Activated B cell treated with CpG ODN at 0.5 μM for 24 hours (primary cell): ENCODE measurements at regions of chr18 and their contacts with region 1.

Region 1: DNA sequence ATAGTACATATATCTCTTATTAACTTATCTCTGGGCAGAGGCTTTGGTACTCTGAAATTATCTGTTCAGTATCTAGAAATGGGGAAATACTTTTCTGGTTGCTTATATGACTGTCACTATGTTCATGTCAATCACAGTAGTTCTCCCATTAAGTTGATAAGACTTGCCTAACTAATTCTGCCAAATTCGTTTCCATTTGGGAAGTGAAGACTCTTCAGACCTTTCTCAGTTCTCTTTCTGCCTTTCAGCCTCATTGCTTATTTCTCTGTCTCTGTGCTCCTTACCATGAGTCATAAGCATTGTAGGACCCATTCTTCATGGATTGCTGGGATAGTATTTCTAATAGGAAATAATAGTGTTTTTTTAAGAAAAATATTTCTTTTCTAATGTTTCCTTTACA is 113.5 kb downstream of the PHLPP1 start:
- DNase-seq: no peak
- ATAC-seq: peak; percentile 25
- H3K4me3 Mint-ChIP-seq: no peak overlapping the region
- H3K27ac Mint-ChIP-seq: no peak overlapping the region
- H3K4me1 Mint-ChIP-seq: peaks cover 35% of the 10 kb centered on the region
- H3K27me3 Mint-ChIP-seq: no peaks in the 10 kb centered on the region
- CTCF ChIP-seq: no peak

Region 2: GRCh38 chr18:62814132-62814759 is 14.6 kb before region 1 on chr18:
- CTCF ChIA-PET with region 1: no interaction called
- POLR2A ChIA-PET with region 1: no interaction called
- intact Hi-C with region 1: loop called (anchors 2 kb)
- DNase-seq: no peak
- ATAC-seq: no peak
- H3K4me3 Mint-ChIP-seq: no peak overlapping the region
- H3K27ac Mint-ChIP-seq: no peak overlapping the region
- H3K4me1 Mint-ChIP-seq: peaks cover 15% of the 10 kb centered on the region
- H3K27me3 Mint-ChIP-seq: no peaks in the 10 kb centered on the region
- CTCF ChIP-seq: no peak